K562 (cell line): ENCODE measurements at regions of chr17 and their contacts with region 1.

Region 1: GRCh38 chr17:42843358-42843934 is 934 bp upstream of the AOC2 start:
- DNase-seq: peak; percentile 61 to 70 (median 64)
- ATAC-seq: peak; percentile 83
- H3K4me3 ChIP-seq: no peak overlapping the region
- H3K27ac ChIP-seq: no peak overlapping the region
- H3K4me1 ChIP-seq: peaks cover 0 to 6% of the 10 kb centered on the region in 2 experiments; a peak in 2 of 5 replicates
- H3K27me3 ChIP-seq: no peaks in the 10 kb centered on the region
- CTCF ChIP-seq: peak; percentile 79 to 96 (median 96)
- EP300 ChIP-seq: no peak
- POLR2A ChIP-seq: no peak
- RAD21 ChIP-seq: peak; percentile 87 to 91

Region 2: GRCh38 chr17:42832974-42833766 is 10.3 kb before region 1 on chr17 and contains the start of gene PSME3:
- CTCF ChIA-PET with region 1: no interaction called
- POLR2A ChIA-PET with region 1: interaction called, 10 read pairs
- in situ Hi-C with region 1: no loop called
- intact Hi-C with region 1: no loop called
- DNase-seq: peak; percentile 90 to 95 (median 92)
- ATAC-seq: peak; percentile 96
- H3K4me3 ChIP-seq: peak within 1 kb of the TSS; percentile 90
- H3K27ac ChIP-seq: peak within 1 kb of the TSS; percentile 95
- H3K4me1 ChIP-seq: peaks cover 3 to 14% of the 10 kb centered on the region in 2 experiments; a peak in 4 of 5 replicates
- H3K27me3 ChIP-seq: no peaks in the 10 kb centered on the region
- CTCF ChIP-seq: peak in 1 of 3 experiments; percentile 1; a peak in 1 of 6 replicates
- EP300 ChIP-seq: peak; percentile 16; the same call in 1 of the 2 replicates
- POLR2A ChIP-seq: peak; percentile 96
- RAD21 ChIP-seq: no peak; a peak in 1 of 4 replicates
- polyA plus RNA-seq, gene PSME3: 31.2 to 43.2 TPM

Region 3: GRCh38 chr17:42928714-42929496 is 85.5 kb after region 1 on chr17:
- CTCF ChIA-PET with region 1: interaction called, 11 read pairs
- POLR2A ChIA-PET with region 1: interaction called, 6 read pairs
- in situ Hi-C with region 1: no loop called
- intact Hi-C with region 1: loop called (anchors 1 kb)
- DNase-seq: peak; percentile 86 to 95 (median 89)
- ATAC-seq: peak; percentile 99
- H3K4me3 ChIP-seq: peak overlapping the region; percentile 7; the same call in 1 of the 2 replicates
- H3K27ac ChIP-seq: peak overlapping the region; percentile 99
- H3K4me1 ChIP-seq: peaks cover 12% of the 10 kb centered on the region in 2 experiments; a peak in 4 of 5 replicates
- H3K27me3 ChIP-seq: no peaks in the 10 kb centered on the region
- CTCF ChIP-seq: peak; percentile 75 to 87 (median 84)
- EP300 ChIP-seq: peak; percentile 74
- POLR2A ChIP-seq: peak; percentile 48
- RAD21 ChIP-seq: peak; percentile 75 to 84

Region 4: GRCh38 chr17:42937712-42938596 is 94.5 kb after region 1 on chr17:
- CTCF ChIA-PET with region 1: interaction called, 37 read pairs
- POLR2A ChIA-PET with region 1: interaction called, 5 read pairs
- in situ Hi-C with region 1: loop called (anchors 5 kb)
- intact Hi-C with region 1: loop called (anchors 1 kb)
- DNase-seq: peak; percentile 54 to 73 (median 60)
- ATAC-seq: peak; percentile 96
- H3K4me3 ChIP-seq: no peak overlapping the region
- H3K27ac ChIP-seq: no peak overlapping the region
- H3K4me1 ChIP-seq: no peaks in the 10 kb centered on the region
- H3K27me3 ChIP-seq: no peaks in the 10 kb centered on the region
- CTCF ChIP-seq: peak; percentile 79 to 91 (median 84)
- EP300 ChIP-seq: 0 out of 2 replicates have a peak, but pooled peaks have one; percentile 9
- POLR2A ChIP-seq: no peak
- RAD21 ChIP-seq: peak; percentile 78 to 91

Region 5: DNA sequence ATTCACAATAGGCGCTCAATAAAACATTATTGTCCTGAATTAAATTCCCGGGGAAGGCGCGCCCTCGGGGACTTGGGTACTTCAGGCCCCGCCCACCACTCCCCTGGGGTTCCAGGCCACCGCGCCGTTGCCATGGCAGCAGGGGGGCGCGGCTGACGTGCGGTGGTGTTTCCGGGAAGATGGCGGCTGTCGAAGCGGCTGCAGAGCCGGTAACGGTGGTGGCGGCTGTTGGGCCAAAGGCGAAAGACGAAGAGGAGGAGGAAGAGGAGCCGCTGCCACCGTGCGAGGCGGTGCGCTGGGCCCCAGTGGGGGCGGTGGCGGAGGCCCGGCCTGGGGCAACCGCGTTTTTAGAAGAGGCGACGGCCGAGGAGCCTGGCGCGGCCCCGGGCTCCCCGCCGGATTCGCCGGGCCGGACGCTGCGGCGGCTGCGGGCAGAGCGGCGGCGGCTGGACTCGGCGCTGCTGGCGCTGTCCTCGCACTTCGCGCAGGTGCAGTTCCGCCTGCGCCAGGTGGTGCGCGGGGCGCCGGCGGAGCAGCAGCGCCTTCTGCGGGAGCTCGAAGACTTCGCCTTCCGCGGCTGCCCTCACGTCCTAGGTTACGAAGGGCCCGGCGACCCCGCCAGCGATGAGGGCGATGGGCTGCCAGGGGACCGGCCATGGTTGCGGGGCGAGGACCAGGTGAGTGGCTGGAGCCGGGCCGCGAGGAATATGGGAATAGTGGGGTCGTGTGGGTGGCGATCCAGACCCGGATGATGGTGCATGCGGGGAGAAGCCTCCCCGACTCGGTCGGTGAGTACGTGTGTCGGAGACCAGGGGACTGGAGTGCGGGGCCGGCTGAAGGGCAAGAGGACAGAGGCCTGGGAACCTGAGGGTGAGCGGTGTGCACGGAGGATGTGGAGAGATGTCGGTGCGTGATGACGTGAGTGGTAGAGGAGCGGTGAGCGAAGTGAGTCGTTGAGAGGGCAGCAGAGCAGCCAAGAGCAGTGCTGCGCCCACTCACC is 137.3 kb after region 1 on chr17 and contains the start of gene RUNDC1:
- CTCF ChIA-PET with region 1: interaction called, 20 read pairs
- POLR2A ChIA-PET with region 1: interaction called, 3 read pairs
- in situ Hi-C with region 1: no loop called
- intact Hi-C with region 1: no loop called
- DNase-seq: peak; percentile 92 to 96 (median 94)
- ATAC-seq: peak; percentile 88
- H3K4me3 ChIP-seq: peak within 1 kb of the TSS; percentile 92
- H3K27ac ChIP-seq: peak within 1 kb of the TSS; percentile 92
- H3K4me1 ChIP-seq: peaks cover 21 to 28% of the 10 kb centered on the region in 2 experiments; a peak in 4 of 5 replicates
- H3K27me3 ChIP-seq: no peaks in the 10 kb centered on the region
- CTCF ChIP-seq: peak; percentile 27 to 78 (median 51); a peak in 4 of 6 replicates
- EP300 ChIP-seq: no peak
- POLR2A ChIP-seq: peak; percentile 57; the same call in 1 of the 2 replicates
- RAD21 ChIP-seq: peak in 1 of 2 experiments; percentile 61; a peak in 2 of 4 replicates
- polyA plus RNA-seq, gene RUNDC1: 3.4 to 3.6 TPM